Activated CD4-positive, alpha-beta memory T cell treated with anti-CD3 and anti-CD28 coated beads for 36 hours (primary cell): ENCODE measurements at regions of chr6 and their contacts with region 1.

Region 1: DNA sequence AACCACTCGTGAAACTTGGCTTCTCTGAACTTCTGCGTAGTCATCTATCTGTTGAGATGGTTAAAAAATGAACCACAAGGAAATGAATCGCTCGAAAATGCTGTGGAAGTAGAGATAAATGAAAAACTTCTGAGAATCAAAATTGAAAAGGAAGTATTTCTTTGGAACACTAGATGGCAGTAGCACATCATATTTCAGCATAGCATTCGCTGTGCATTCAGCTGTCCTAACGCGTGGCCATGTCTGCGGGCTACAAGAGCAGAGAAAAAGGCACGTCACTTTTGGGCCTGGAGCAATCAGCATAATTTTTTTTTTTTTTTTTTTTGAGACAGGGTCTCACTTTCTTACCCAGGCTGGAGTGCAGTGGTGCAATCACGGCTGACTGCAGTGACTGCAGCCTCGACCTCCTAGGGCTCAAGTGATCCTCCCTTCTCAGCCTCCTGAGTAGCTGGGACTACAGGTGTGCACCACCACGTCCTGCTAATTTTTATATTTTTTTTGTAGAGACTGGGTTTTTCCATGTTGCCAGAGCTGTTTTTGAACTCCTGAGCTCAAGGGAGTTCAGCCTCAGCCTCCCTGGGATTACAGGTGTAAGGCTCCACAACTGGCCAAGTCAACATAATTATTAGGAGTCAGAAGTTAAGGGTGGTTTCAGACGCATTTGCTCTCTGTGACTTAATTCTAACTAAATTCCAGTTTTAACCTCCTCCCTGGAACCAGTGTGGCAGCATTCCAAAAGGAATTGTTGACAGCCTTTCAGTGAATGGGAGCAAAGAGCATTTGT is 8.8 kb upstream of the PERP start:
- DNase-seq: peak; percentile 44
- H3K4me3 Mint-ChIP-seq: no peak overlapping the region
- H3K27ac Mint-ChIP-seq: no peak overlapping the region
- H3K4me1 Mint-ChIP-seq: peaks cover 6% of the 10 kb centered on the region
- H3K27me3 Mint-ChIP-seq: peaks cover 23% of the 10 kb centered on the region

Region 2: DNA sequence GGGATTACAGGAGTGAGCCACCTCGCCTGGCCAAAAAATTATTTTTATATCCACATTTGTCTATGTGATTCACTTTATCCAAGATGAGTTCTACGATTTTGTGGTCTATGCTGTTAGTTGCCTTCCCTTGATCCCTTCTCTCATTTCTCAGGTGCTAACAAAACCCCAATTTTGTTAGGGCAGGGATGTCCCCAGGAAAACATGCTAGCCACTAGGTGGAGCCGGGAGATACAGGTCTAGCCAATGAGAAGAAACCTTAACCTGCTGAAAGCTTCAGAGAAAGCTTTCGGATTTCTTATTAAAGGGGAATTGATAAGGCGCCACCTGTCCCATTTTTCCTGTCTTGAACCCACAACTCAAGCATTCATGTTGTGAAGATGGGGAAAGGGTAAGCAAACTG is 454.5 kb before region 1 on chr6:
- CTCF ChIA-PET with region 1: no interaction called
- POLR2A ChIA-PET with region 1: no interaction called
- intact Hi-C with region 1: no loop called
- DNase-seq: peak; percentile 58
- H3K4me3 Mint-ChIP-seq: no peak overlapping the region
- H3K27ac Mint-ChIP-seq: no peak overlapping the region
- H3K4me1 Mint-ChIP-seq: peaks cover 24% of the 10 kb centered on the region
- H3K27me3 Mint-ChIP-seq: peaks cover 8% of the 10 kb centered on the region

Region 3: DNA sequence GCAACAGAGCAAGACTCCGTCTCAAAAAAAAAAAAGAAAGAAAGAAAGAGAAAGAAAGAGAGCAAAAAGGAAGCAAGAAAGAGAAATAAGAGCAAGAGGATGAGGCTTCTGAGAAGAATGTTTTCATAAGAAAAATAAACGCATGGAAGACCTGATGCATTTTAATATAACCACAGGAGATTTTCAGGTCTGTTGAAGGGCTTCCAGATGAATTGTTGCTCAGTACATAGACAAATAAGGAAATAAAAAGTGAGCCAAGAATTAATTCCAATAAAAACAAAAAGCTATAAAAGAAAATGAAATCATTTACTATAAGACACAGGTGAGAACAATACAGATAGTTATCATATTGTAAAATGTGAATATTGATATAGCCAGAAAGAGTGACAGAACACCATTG is 52.3 kb before region 1 on chr6:
- CTCF ChIA-PET with region 1: no interaction called
- POLR2A ChIA-PET with region 1: no interaction called
- intact Hi-C with region 1: no loop called
- DNase-seq: no peak
- H3K4me3 Mint-ChIP-seq: no peak overlapping the region
- H3K27ac Mint-ChIP-seq: no peak overlapping the region
- H3K4me1 Mint-ChIP-seq: no peaks in the 10 kb centered on the region
- H3K27me3 Mint-ChIP-seq: peaks cover 6% of the 10 kb centered on the region

Region 4: GRCh38 chr6:138287144-138287955 is 171.3 kb after region 1 on chr6:
- CTCF ChIA-PET with region 1: interaction called, 102 read pairs
- POLR2A ChIA-PET with region 1: no interaction called
- intact Hi-C with region 1: loop called (anchors 1 kb)
- DNase-seq: peak; percentile 60
- H3K4me3 Mint-ChIP-seq: no peak overlapping the region
- H3K27ac Mint-ChIP-seq: no peak overlapping the region
- H3K4me1 Mint-ChIP-seq: peaks cover 3% of the 10 kb centered on the region
- H3K27me3 Mint-ChIP-seq: no peaks in the 10 kb centered on the region

Region 5: DNA sequence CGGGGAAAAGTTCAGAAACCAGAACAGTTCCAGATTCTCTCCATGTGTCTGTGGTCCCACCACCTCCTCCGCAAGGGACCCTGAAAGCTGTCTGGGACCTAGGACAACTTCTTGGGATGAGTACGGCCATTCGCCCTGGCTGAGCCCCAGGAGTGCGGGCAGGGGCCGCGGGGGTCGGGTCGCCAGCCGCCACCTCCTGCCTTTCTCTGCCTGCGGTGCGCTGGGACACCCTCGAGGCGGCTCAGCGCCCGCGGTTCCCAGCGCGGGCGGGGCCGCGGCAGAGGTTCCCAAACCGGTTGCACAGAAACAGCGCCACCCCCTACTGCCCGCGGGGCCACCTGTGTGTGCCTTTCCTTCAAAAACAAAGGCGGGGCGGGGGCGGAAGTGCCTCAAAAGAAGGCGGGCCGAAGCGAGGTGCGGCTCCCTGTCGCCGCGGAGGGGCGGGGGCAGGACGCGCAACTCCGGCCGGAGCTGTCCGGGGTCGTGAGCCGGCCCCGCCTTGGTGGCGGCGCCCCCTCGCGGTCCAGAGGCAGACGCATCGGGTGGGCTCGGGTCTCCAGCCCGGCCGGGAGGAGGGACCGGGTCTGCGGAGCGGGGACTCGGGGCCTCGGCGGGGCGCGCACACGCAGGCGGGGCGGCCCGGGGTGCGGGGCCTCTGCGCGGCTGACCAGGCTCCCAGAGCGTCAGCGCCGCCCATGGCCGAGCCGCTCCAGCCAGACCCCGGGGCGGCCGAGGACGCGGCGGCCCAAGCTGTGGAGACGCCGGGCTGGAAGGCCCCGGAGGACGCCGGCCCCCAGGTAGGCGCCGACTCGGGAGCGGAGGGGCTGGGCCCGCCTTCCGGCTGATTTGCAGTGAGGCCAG is 288.0 kb after region 1 on chr6 and contains the start of gene HEBP2:
- CTCF ChIA-PET with region 1: interaction called, 3 read pairs
- POLR2A ChIA-PET with region 1: no interaction called
- intact Hi-C with region 1: loop called (anchors 5 kb)
- DNase-seq: peak; percentile 97
- H3K4me3 Mint-ChIP-seq: peak within 1 kb of the TSS; percentile 79
- H3K27ac Mint-ChIP-seq: peak within 1 kb of the TSS; percentile 58
- H3K4me1 Mint-ChIP-seq: peaks cover 23% of the 10 kb centered on the region
- H3K27me3 Mint-ChIP-seq: no peaks in the 10 kb centered on the region
- total RNA-seq, gene HEBP2: 49.5 to 49.6 TPM

Region 6: DNA sequence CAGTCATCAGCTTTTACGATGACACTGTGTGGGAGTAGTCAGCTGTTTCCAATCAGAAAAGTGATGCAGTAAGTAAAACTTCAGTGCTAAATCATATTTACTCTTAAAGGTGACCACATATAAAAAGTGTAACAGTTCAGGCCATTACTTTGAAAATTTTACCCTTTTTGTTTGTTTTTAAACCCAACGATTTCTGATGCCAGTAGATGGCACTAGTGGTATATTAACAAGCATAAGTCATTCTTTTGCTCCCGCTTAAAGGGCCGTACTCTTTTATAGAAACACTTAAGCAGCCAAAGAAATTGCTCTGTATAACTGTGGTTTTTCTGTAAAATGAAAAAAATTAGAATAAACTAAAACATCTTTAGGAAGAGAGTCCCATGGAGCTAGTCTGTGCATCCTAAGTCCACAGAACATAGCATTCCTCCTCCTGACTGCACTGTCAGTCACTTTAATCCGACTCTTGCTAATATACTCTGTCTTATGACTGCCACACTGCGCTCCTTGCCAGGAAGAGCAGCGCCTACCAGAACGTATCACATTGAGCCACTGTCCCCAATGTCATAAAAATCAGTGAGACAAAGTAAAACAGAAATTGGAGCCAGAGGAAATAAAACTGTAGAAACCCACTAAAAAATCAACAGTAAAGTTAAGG is 313.0 kb after region 1 on chr6:
- CTCF ChIA-PET with region 1: interaction called, 16 read pairs
- POLR2A ChIA-PET with region 1: interaction called, 3 read pairs
- intact Hi-C with region 1: loop called (anchors 2 kb)
- DNase-seq: no peak
- H3K4me3 Mint-ChIP-seq: no peak overlapping the region
- H3K27ac Mint-ChIP-seq: no peak overlapping the region
- H3K4me1 Mint-ChIP-seq: no peaks in the 10 kb centered on the region
- H3K27me3 Mint-ChIP-seq: no peaks in the 10 kb centered on the region

Region 7: DNA sequence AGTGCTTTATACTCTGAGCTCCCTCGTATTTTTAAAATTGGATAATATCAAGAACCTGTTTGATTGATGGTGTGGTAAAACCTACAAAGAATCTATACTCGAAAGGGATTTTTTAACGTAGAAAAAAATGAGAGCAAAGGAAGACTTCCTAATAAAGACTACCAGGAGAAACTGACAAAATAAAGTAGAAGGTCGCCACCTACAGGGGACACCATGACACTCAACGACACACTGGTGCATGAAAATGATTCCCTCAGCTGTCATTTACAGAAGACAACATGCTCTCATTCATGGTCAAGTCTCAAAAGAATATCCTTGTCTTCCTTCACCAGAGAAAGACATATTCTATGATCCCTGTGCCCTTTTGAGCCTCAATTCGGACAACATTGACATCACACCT is 393.3 kb after region 1 on chr6:
- CTCF ChIA-PET with region 1: interaction called, 53 read pairs
- POLR2A ChIA-PET with region 1: no interaction called
- intact Hi-C with region 1: loop called (anchors 1 kb)
- DNase-seq: peak; percentile 64
- H3K4me3 Mint-ChIP-seq: no peak overlapping the region
- H3K27ac Mint-ChIP-seq: no peak overlapping the region
- H3K4me1 Mint-ChIP-seq: peaks cover 2% of the 10 kb centered on the region
- H3K27me3 Mint-ChIP-seq: peaks cover 1% of the 10 kb centered on the region

Region 8: DNA sequence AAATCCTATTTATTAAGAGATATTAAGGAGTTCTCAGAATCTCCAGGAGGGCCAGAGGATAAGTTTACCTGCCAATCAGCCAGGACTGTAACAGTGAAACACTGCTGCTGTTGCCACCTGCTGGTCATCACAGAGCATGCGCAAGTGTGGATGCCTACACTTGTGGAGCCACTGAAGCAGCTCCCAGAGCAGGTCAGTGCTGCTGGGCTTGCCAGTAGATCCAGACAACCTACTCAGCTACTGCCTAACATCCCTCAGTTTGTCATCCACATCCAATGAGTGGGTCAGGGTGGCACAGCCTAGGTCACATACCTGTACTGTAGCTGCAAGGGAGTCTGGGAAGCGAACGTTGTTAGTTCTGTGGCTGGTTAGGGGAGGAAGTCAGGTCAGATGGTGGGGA is 401.6 kb after region 1 on chr6:
- CTCF ChIA-PET with region 1: interaction called, 45 read pairs
- POLR2A ChIA-PET with region 1: no interaction called
- intact Hi-C with region 1: no loop called
- DNase-seq: peak; percentile 61
- H3K4me3 Mint-ChIP-seq: no peak overlapping the region
- H3K27ac Mint-ChIP-seq: no peak overlapping the region
- H3K4me1 Mint-ChIP-seq: peaks cover 7% of the 10 kb centered on the region
- H3K27me3 Mint-ChIP-seq: peaks cover 9% of the 10 kb centered on the region

Region 9: DNA sequence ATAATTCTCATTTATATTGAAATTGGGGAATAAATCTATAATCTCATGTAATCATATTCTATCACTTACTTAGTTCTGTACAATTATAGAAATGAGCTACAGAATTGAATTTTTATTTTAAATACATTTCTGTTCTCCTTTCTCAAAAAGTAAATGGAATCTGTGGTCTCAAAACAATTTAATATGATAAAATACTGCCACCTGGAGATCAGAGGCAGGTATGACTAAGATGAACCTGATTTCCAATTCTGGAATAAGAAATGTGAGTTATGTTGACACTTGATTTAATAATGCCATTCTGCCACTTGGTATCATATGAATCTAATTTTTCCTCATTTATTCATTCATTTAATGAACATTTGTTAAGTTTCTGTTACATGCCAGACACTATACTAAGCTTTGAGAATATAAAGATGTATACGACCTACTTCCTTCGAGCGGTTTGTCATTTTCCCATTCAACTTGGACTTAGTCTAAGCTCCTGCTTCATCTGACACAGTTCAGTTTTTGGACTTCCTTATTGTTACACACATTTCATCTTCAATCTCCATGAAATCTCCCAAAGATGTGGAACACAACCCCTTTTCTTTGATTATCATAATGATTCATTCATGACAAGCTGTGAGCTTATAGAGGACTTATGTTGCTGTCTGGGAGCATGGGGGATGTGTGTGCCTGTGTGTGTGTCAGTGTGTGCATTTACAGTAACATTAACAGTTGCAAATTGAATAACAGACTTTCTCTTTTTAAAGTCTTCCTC is 650.0 kb after region 1 on chr6:
- CTCF ChIA-PET with region 1: interaction called, 14 read pairs
- POLR2A ChIA-PET with region 1: no interaction called
- intact Hi-C with region 1: loop called (anchors 2 kb)
- DNase-seq: no peak
- H3K4me3 Mint-ChIP-seq: no peak overlapping the region
- H3K27ac Mint-ChIP-seq: no peak overlapping the region
- H3K4me1 Mint-ChIP-seq: peaks cover 9% of the 10 kb centered on the region
- H3K27me3 Mint-ChIP-seq: no peaks in the 10 kb centered on the region